ENCODE measurements at regions of chr7 and their contacts with region 1.

Region 1: GRCh38 chr7:116809636-116810266 is 52.6 kb upstream of the CAPZA2 start:
- DNase-seq: peak; percentile 31 to 71
- H3K4me3 ChIP-seq: peak overlapping the region; percentile 25; the same call in 1 of the 2 replicates
- H3K27ac ChIP-seq: peak overlapping the region; percentile 81
- H3K4me1 ChIP-seq: peaks cover 44% of the 10 kb centered on the region
- H3K27me3 ChIP-seq: no peaks in the 10 kb centered on the region
- CTCF ChIP-seq: peak; percentile 87

Region 2: GRCh38 chr7:116138202-116138801 is 671.4 kb before region 1 on chr7:
- CTCF ChIA-PET with region 1: no interaction called
- POLR2A ChIA-PET with region 1: no interaction called
- intact Hi-C with region 1: loop called (anchors 1 kb)
- DNase-seq: peak; percentile 24 to 43
- H3K4me3 ChIP-seq: no peak overlapping the region
- H3K27ac ChIP-seq: no peak overlapping the region
- H3K4me1 ChIP-seq: no peaks in the 10 kb centered on the region
- H3K27me3 ChIP-seq: no peaks in the 10 kb centered on the region
- CTCF ChIP-seq: peak; percentile 82

Region 3: GRCh38 chr7:116173051-116174028 is 636.4 kb before region 1 on chr7:
- CTCF ChIA-PET with region 1: no interaction called
- POLR2A ChIA-PET with region 1: no interaction called
- intact Hi-C with region 1: loop called (anchors 2 kb)
- DNase-seq: peak; percentile 26 to 48
- H3K4me3 ChIP-seq: no peak overlapping the region
- H3K27ac ChIP-seq: no peak overlapping the region
- H3K4me1 ChIP-seq: peaks cover 11% of the 10 kb centered on the region; the same call in 1 of the 2 replicates
- H3K27me3 ChIP-seq: no peaks in the 10 kb centered on the region
- CTCF ChIP-seq: peak; percentile 84

Region 4: GRCh38 chr7:116576350-116577319 is 233.1 kb before region 1 on chr7:
- CTCF ChIA-PET with region 1: no interaction called
- POLR2A ChIA-PET with region 1: no interaction called
- intact Hi-C with region 1: no loop called
- DNase-seq: peak in 1 of 2 experiments; percentile 51
- H3K4me3 ChIP-seq: no peak overlapping the region
- H3K27ac ChIP-seq: peak overlapping the region; percentile 35
- H3K4me1 ChIP-seq: peaks cover 19% of the 10 kb centered on the region
- H3K27me3 ChIP-seq: no peaks in the 10 kb centered on the region
- CTCF ChIP-seq: no peak

Region 5: DNA sequence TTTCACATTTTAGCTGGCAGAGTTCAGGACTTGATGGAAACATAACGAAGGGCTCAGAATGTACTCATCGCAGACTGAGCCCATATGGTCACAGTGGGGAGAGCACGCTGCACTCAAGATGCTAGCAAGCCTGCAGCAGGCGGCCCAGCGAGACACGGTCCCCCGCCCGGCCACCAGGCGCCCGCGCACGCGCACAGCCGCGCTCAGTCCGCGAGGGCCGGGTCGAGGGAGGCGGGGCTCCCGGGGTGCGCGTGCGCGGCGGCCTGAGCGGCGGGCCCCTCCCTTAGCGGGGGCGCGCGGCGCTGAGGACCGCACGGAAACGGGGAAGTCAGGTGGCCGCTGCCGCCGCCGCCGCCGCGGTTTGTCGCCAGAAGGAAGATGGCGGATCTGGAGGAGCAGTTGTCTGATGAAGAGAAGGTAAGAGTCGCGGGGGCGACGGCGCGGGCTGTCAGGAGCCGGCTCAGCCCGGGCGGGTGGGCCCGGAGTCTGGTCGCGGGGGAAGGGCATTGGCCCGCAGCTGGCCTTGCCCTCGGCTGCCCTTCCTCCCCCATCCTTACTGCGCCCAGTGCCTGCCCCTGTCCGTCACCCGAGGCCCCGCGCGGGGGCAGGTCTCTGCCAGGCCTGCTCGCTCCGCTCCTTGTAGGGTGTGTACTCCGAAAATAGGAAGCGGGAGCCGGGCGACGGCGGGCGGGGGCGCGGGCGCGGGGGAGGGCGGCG is 52.6 kb after region 1 on chr7 and contains the start of gene CAPZA2:
- CTCF ChIA-PET with region 1: no interaction called
- POLR2A ChIA-PET with region 1: interaction called, 5 read pairs
- intact Hi-C with region 1: loop called (anchors 1 kb)
- DNase-seq: peak; percentile 74 to 97
- H3K4me3 ChIP-seq: peak within 1 kb of the TSS; percentile 99
- H3K27ac ChIP-seq: peak within 1 kb of the TSS; percentile 53
- H3K4me1 ChIP-seq: peaks cover 37% of the 10 kb centered on the region
- H3K27me3 ChIP-seq: no peaks in the 10 kb centered on the region
- CTCF ChIP-seq: no peak
- total RNA-seq, gene CAPZA2: 171 and 203 TPM in 2 replicates

Region 6: GRCh38 chr7:117119192-117119924 is 309.6 kb after region 1 on chr7:
- CTCF ChIA-PET with region 1: interaction called, 12 read pairs
- POLR2A ChIA-PET with region 1: no interaction called
- intact Hi-C with region 1: loop called (anchors 10 kb)
- DNase-seq: peak in 1 of 2 experiments; percentile 64
- H3K4me3 ChIP-seq: no peak overlapping the region
- H3K27ac ChIP-seq: no peak overlapping the region
- H3K4me1 ChIP-seq: peaks cover 5% of the 10 kb centered on the region; the same call in 1 of the 2 replicates
- H3K27me3 ChIP-seq: no peaks in the 10 kb centered on the region
- CTCF ChIP-seq: peak; percentile 80

Region 7: DNA sequence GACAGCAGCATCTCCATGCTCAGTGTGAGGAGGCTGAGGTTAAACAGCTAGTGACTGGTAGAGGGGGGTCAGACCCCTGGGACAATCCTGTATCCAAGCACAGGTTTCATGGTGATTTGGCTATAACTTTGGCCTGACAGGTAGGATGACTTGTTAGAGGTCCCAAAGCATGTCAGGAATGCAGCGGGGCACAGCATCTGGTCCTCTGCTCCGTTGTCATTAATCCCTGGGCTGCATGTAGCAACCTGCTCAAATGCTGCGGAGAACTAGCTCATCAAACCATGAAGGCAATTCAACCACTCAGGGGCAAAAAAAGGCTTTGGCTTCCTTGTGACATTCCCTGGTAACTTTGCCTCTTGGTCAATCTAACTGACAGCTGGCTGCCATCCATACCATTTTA is 486.3 kb after region 1 on chr7:
- CTCF ChIA-PET with region 1: no interaction called
- POLR2A ChIA-PET with region 1: no interaction called
- intact Hi-C with region 1: no loop called
- DNase-seq: no peak
- H3K4me3 ChIP-seq: no peak overlapping the region
- H3K27ac ChIP-seq: no peak overlapping the region
- H3K4me1 ChIP-seq: no peaks in the 10 kb centered on the region
- H3K27me3 ChIP-seq: no peaks in the 10 kb centered on the region; the same call in 1 of the 2 replicates
- CTCF ChIP-seq: no peak

Region 8: DNA sequence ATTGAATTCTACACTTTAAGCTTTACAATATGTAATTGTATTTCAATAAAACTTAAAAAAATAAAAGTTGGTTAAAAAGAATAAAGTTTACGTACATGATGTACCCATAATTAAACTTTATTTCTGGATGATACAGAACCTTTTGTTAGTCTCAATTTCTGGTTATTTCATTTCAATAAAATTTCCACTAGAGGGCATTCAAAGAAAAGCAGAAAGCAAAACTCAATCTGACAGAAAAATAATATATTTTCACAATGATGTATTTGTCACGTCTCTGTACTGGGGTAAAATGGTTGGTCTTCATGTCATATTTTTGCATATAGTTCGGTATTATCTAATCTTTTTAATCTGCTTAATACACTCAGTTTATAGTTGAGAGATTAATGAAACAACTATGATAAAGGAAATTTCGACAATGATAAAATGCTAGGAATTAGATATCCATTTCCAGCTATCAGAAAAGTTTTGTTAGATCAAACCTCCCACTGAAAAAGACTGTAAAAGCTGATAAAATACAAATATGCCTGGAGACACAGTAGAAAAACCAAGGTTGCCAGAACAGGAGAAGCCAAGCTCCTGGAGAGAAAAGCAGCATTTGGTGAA is 590.2 kb after region 1 on chr7:
- CTCF ChIA-PET with region 1: no interaction called
- POLR2A ChIA-PET with region 1: no interaction called
- intact Hi-C with region 1: no loop called
- DNase-seq: no peak
- H3K4me3 ChIP-seq: no peak overlapping the region
- H3K27ac ChIP-seq: no peak overlapping the region
- H3K4me1 ChIP-seq: no peaks in the 10 kb centered on the region
- H3K27me3 ChIP-seq: no peaks in the 10 kb centered on the region
- CTCF ChIP-seq: peak; percentile 70